ENCODE measurements at regions of chr4 and their contacts with region 1.

Region 1: DNA sequence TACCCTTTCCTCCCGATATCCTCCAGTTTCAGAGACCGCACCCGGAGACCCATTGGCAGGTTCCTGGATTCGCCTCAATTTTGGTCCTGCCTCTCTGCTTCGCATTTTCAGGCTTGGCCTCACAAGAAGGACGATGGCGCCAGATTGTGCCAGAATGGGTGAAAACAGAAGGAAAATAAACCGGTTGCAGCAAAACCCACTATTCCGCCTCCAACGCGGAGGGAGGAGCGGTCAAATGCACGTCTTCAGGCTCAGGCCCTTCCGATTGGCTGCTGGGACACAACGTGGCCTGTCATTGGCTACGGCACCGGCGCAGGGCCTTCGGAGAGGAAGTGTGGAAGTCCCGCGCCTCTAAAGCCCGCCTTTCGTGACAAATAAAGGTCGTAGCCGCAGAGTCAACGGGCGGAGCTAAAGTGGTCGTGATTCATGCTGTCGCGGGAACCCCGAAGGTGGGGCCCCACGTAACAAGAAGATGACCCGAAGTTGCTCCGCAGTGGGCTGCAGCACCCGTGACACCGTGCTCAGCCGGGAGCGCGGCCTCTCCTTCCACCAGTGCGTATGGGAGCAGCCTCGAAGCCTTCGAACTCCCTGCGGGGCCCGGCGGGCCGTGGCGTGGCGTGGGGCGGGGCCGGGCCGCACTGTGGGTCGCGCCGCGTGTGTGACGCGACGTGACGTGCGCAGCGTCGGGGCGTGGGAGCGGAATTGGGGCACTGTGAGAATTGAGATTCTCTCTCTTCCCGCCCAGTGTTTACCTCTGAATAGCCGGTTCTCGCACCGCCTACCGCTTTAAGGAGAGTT is at the start of gene THAP9:
- DNase-seq: peak; percentile 99
- H3K4me3 Mint-ChIP-seq: no peak within 1 kb of the TSS
- H3K27ac Mint-ChIP-seq: no peak within 1 kb of the TSS
- H3K4me1 Mint-ChIP-seq: peaks cover 38% of the 10 kb centered on the region
- H3K27me3 Mint-ChIP-seq: no peaks in the 10 kb centered on the region
- total RNA-seq, gene THAP9: 1.8 and 2.6 TPM in 2 replicates

Region 2: GRCh38 chr4:81740487-81740886 is 1160.0 kb before region 1 on chr4:
- intact Hi-C with region 1: no loop called
- DNase-seq: no peak
- H3K4me3 Mint-ChIP-seq: no peak overlapping the region
- H3K27ac Mint-ChIP-seq: no peak overlapping the region
- H3K4me1 Mint-ChIP-seq: no peaks in the 10 kb centered on the region
- H3K27me3 Mint-ChIP-seq: peaks cover 6% of the 10 kb centered on the region

Region 3: DNA sequence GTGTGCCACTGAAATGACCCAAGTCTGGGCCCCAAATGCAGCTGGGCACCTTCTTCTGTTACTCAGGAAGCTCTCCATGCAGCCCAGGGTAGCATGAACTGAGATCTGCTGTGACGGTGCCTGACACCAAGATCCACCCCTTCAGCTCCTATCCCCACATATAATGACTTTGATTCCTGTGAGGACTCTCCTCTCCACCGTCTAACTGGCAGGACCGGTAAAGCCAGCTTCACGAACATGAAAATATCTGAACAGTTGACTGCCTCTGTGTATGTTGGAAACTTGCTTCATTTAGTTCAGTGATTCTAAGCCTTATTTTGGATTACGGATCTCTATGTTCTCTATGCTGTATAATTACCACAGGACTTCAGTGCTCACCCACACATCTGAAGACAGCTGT is 223.2 kb before region 1 on chr4:
- intact Hi-C with region 1: no loop called
- DNase-seq: no peak
- H3K4me3 Mint-ChIP-seq: no peak overlapping the region
- H3K27ac Mint-ChIP-seq: no peak overlapping the region
- H3K4me1 Mint-ChIP-seq: no peaks in the 10 kb centered on the region
- H3K27me3 Mint-ChIP-seq: peaks cover 16% of the 10 kb centered on the region

Region 4: DNA sequence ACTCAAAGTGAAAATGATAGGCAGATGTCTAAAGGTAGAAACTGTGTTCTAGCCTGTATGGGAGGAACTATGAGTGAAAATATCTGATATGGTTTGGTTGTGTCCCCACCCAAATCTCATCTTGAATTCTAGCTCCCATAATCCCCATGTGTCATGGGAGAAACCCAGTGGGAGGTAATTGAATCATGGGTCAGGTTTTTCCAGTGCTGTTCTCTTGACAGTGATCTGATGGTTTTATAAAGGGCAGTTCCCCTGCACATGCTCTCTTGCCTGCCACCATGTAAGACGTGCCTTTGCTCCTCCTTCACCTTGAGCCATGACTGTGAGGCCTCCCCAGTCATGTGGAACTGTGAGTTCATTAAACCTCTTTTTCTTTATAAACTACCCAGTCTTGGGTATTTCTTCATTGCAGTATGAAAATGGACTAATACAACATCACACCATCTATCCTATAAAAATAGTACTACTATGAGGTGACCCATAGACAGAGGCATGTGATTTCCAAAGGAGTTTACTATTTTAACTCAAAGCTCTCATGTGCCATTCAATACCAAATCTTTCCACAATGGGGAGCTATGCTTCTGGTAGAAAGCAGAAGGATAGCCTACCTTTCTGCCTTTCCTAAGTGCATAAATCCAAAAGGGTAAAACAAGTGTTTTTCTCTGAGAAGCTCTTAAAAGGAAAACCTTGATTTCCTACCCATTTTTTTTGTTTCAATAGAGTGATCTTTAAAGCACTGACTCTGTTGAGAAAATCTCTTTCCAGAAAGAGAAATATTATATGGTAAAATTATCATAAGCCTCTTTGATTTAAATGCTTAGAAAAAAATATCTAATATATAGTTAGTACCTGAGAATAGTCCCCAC is 48.4 kb before region 1 on chr4:
- intact Hi-C with region 1: loop called (anchors 2 kb)
- DNase-seq: no peak
- H3K4me3 Mint-ChIP-seq: no peak overlapping the region
- H3K27ac Mint-ChIP-seq: peak overlapping the region; percentile 68
- H3K4me1 Mint-ChIP-seq: peaks cover 7% of the 10 kb centered on the region
- H3K27me3 Mint-ChIP-seq: no peaks in the 10 kb centered on the region

Region 5: GRCh38 chr4:82948647-82949204 is 48.2 kb after region 1 on chr4:
- intact Hi-C with region 1: no loop called
- DNase-seq: no peak
- H3K4me3 Mint-ChIP-seq: no peak overlapping the region
- H3K27ac Mint-ChIP-seq: no peak overlapping the region
- H3K4me1 Mint-ChIP-seq: peaks cover 10% of the 10 kb centered on the region
- H3K27me3 Mint-ChIP-seq: no peaks in the 10 kb centered on the region

Region 6: GRCh38 chr4:83034630-83035494 is 134.3 kb after region 1 on chr4 and contains the start of gene COPS4:
- intact Hi-C with region 1: loop called (anchors 1 kb)
- DNase-seq: peak; percentile 96
- H3K4me3 Mint-ChIP-seq: peak within 1 kb of the TSS; percentile 98
- H3K27ac Mint-ChIP-seq: peak within 1 kb of the TSS; percentile 100
- H3K4me1 Mint-ChIP-seq: peaks cover 18% of the 10 kb centered on the region
- H3K27me3 Mint-ChIP-seq: peaks cover 4% of the 10 kb centered on the region
- total RNA-seq, gene COPS4: 33.7 and 35.2 TPM in 2 replicates

Region 7: GRCh38 chr4:83231620-83232076 is 331.1 kb after region 1 on chr4:
- intact Hi-C with region 1: loop called (anchors 1 kb)
- DNase-seq: peak; percentile 60
- H3K4me3 Mint-ChIP-seq: no peak overlapping the region
- H3K27ac Mint-ChIP-seq: peak overlapping the region; percentile 2
- H3K4me1 Mint-ChIP-seq: peaks cover 54% of the 10 kb centered on the region
- H3K27me3 Mint-ChIP-seq: peaks cover 33% of the 10 kb centered on the region

Region 8: GRCh38 chr4:83356899-83357661 is 456.6 kb after region 1 on chr4:
- intact Hi-C with region 1: loop called (anchors 1 kb)
- DNase-seq: no peak
- H3K4me3 Mint-ChIP-seq: no peak overlapping the region
- H3K27ac Mint-ChIP-seq: peak overlapping the region; percentile 85
- H3K4me1 Mint-ChIP-seq: peaks cover 24% of the 10 kb centered on the region
- H3K27me3 Mint-ChIP-seq: no peaks in the 10 kb centered on the region